CD14-positive monocyte (primary cell): ENCODE measurements at regions of chr16 and their contacts with region 1.

Region 1: GRCh38 chr16:3129137-3130131 is 5.4 kb upstream of the ZNF213 start:
- DNase-seq: peak; percentile 82 to 87 (median 83)
- H3K4me3 ChIP-seq: peak overlapping the region; percentile 56 to 89 (median 65)
- H3K4me3 Mint-ChIP-seq: peak overlapping the region; percentile 85 to 93
- H3K27ac ChIP-seq: peak overlapping the region; percentile 37 to 66
- H3K27ac Mint-ChIP-seq: peak overlapping the region in 6 of 7 donors; percentile 68 to 88 (median 78)
- H3K4me1 ChIP-seq: peaks cover 31 to 43% of the 10 kb centered on the region in 2 donors
- H3K4me1 Mint-ChIP-seq: peaks cover 40% of the 10 kb centered on the region
- H3K27me3 ChIP-seq: no peaks in the 10 kb centered on the region
- H3K27me3 Mint-ChIP-seq: peaks cover 0 to 2% (median 0%) of the 10 kb centered on the region in 3 donors
- CTCF ChIP-seq: peak; percentile 95

Region 2: DNA sequence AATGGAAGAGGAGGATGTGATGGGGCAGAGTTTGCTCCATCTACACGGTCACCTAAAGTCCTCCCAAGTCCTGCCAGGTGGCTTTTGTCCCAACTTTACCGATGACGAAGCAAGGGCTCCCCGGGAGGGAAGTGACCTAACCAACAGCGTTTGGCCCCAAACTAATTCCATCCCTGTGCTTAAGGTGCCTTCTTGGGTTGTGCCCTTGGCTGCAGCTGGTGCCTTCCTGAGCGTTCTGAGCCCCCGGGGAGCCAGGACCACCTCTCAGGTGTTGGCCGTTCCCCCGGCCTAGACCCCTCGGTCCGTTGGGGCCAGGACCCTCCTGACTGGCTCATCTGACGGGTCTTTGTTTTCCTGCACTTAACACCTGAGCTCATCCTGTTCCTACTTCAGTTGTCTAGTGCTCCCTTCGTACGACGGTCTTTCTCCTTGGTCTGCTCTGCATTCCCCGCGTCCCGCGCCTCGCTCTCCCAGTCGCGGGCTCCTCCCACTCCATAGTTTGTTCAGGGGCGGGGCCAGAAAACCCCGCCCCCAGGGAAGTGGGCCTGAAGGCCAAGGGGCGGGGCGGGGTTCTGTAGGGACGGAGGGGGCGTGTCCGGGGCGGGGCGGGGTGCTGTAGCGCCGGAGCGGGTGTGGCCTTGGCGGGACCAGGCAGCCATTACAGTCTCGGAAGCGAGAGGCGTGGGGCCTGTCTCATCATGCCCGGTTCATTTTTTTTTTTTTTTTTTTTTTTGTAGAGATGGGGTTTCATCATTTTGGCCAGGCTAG is 29.5 kb before region 1 on chr16:
- intact Hi-C with region 1: loop called (anchors 1 to 2 kb)
- DNase-seq: peak; percentile 93 to 96 (median 95)
- H3K4me3 ChIP-seq: peak overlapping the region in 2 of 3 experiments; percentile 19 to 73
- H3K4me3 Mint-ChIP-seq: peak overlapping the region; percentile 78 to 94
- H3K27ac ChIP-seq: no peak overlapping the region
- H3K27ac Mint-ChIP-seq: peak overlapping the region in 6 of 7 donors; percentile 47 to 92 (median 79)
- H3K4me1 ChIP-seq: peaks cover 52 to 53% of the 10 kb centered on the region in 2 donors
- H3K4me1 Mint-ChIP-seq: peaks cover 49% of the 10 kb centered on the region
- H3K27me3 ChIP-seq: no peaks in the 10 kb centered on the region
- H3K27me3 Mint-ChIP-seq: peaks cover 7 to 16% (median 10%) of the 10 kb centered on the region in 3 donors
- CTCF ChIP-seq: no peak

Region 3: DNA sequence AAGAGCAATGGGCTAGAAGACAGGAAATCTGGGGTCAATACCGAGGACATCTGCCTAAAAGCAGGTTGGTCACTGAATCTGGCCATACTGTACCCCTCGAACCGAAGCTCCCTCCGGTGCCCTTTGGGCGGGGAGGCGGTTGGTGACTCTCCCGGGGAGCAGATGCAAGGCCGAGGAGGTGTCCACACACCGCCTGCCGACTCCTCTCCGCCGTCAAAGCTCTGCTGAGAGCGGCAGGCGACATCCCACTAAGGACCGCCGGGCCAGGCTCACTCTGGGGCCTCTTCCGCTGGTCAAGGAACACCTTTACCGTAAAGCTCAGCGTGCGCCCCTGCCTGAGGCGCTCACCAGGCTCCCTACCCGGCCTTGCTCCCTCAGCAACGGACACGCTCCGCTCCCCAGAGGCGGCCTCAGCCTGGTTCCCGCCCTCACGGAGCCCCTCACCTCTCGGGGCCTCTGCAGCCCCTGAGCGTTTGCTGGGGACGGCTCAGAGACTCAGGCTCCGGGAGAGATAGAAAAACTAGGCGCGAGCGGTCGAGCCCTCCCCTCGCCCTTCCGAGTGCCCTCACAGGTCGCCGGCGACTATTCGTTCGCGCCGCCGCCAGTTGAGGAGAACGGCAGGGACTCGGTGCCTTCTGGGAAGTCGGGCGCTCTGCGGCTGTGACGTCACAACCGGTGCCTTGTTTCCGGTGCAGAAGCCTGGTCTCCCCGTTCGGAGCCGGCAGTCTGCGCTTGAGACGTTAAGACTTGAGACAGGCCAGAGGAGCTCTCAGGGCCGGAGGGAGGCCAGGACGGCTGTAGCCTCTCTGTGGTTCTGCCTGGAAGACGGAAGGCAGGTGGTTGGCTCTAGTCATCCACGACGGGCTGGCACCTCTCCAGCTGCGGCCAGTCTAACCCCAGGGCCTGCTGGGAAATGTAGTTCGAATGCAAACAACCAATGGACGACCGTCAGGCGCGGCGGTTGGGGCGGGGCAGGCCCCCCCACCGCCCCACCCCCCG is 105.4 kb after region 1 on chr16 and contains the start of gene ZNF200:
- intact Hi-C with region 1: no loop called
- DNase-seq: peak; percentile 88 to 91 (median 91)
- H3K4me3 ChIP-seq: peak within 1 kb of the TSS; percentile 73 to 97 (median 75)
- H3K4me3 Mint-ChIP-seq: peak within 1 kb of the TSS; percentile 91 to 96
- H3K27ac ChIP-seq: peak within 1 kb of the TSS; percentile 86 to 97
- H3K27ac Mint-ChIP-seq: peak within 1 kb of the TSS; percentile 97 to 99 (median 99)
- H3K4me1 ChIP-seq: peaks cover 12 to 13% of the 10 kb centered on the region in 2 donors
- H3K4me1 Mint-ChIP-seq: peaks cover 18% of the 10 kb centered on the region
- H3K27me3 ChIP-seq: no peaks in the 10 kb centered on the region
- H3K27me3 Mint-ChIP-seq: peaks cover 0 to 2% (median 1%) of the 10 kb centered on the region in 3 donors
- CTCF ChIP-seq: no peak
- polyA plus RNA-seq, gene ZNF200: 2.0 to 2.8 (median 2.5) TPM